Gastrocnemius medialis (tissue), 4 donors: ENCODE measurements at regions of chr10 and their contacts with region 1.

Region 1: GRCh38 chr10:71383972-71384687 is 12.6 kb upstream of the CDH23 start:
- DNase-seq: peak; percentile 24 to 55
- ATAC-seq: peak; percentile 73 to 76
- H3K4me3 ChIP-seq: no peak overlapping the region
- H3K27ac ChIP-seq: no peak overlapping the region
- H3K4me1 ChIP-seq: no peaks in the 10 kb centered on the region
- H3K27me3 ChIP-seq: peaks cover 0 to 3% (median 0%) of the 10 kb centered on the region in 3 donors
- CTCF ChIP-seq: peak; percentile 82 to 95 (median 90)
- POLR2A ChIP-seq: no peak

Region 2: GRCh38 chr10:71314028-71314693 is 70.0 kb before region 1 on chr10:
- in situ Hi-C with region 1: loop called in 1 of 4 experiments (anchors 5 kb)
- intact Hi-C with region 1: no loop called
- DNase-seq: peak in 1 of 2 donors; percentile 35
- ATAC-seq: peak; percentile 54 to 62
- H3K4me3 ChIP-seq: peak overlapping the region in 1 of 4 donors; percentile 25
- H3K27ac ChIP-seq: peak overlapping the region in 2 of 4 donors; percentile 18 to 59
- H3K4me1 ChIP-seq: peaks cover 11% of the 10 kb centered on the region in 2 donors
- H3K27me3 ChIP-seq: no peaks in the 10 kb centered on the region
- CTCF ChIP-seq: peak; percentile 39 to 96 (median 83)
- POLR2A ChIP-seq: no peak

Region 3: GRCh38 chr10:71569775-71570588 is 185.9 kb after region 1 on chr10:
- in situ Hi-C with region 1: loop called in 2 of 4 experiments (anchors 10 kb)
- intact Hi-C with region 1: loop called (anchors 1 kb)
- DNase-seq: peak; percentile 45 to 56
- ATAC-seq: peak; percentile 61 to 73
- H3K4me3 ChIP-seq: no peak overlapping the region
- H3K27ac ChIP-seq: no peak overlapping the region
- H3K4me1 ChIP-seq: peaks cover 0 to 1% of the 10 kb centered on the region in 2 donors
- H3K27me3 ChIP-seq: no peaks in the 10 kb centered on the region
- CTCF ChIP-seq: peak; percentile 75 to 89 (median 82)
- POLR2A ChIP-seq: no peak

Region 4: DNA sequence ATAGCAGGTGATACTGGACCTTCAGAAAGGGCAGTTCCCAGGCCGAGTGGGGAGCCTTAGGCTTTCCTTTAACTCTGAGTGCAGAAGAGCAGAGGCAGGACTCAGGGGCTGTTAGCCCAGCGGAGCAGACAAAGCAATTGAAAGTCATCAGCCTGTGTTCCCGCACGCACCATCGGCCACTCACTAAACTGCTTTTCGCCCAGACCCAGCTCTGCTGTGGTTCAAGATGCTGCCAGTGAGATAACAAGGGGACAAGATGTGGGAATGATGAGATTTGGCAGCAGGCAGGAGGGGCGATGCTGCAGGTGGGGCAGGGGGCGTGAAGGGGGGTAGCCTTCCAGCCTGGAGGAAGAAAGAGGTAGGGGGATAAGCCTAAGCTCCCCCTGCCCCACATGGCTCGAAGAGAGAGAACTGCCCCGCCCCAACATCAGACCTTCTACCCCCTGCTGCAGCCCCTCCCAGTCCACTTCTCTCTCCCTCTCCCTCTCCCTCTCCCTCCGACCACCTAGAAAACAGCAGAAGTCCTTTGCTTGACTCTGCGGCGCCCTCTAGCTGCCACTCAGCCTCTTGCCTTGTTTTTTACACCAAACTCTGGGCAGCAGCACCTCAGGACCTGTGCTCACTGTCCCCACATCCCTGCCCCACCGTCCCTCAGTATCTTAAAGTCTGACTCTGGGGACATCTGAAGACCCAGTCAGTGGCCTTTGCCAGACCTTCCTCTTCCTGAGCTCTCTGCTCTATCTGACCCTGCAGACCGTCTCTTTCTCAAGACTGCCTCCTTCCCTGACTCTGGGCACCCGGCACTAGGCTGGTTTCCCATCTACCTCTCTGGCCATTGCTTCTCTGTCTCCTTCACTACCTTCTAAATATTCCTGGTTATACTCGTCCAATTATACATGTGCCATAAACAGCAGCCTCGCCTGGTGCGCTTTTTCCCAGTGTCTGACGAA is 225.0 kb after region 1 on chr10:
- in situ Hi-C with region 1: no loop called
- intact Hi-C with region 1: loop called (anchors 1 kb)
- DNase-seq: peak; percentile 55 to 74
- ATAC-seq: peak in 1 of 2 donors; percentile 32
- H3K4me3 ChIP-seq: no peak overlapping the region
- H3K27ac ChIP-seq: no peak overlapping the region
- H3K4me1 ChIP-seq: peaks cover 18 to 19% of the 10 kb centered on the region in 2 donors
- H3K27me3 ChIP-seq: no peaks in the 10 kb centered on the region
- CTCF ChIP-seq: peak; percentile 69 to 89 (median 78)
- POLR2A ChIP-seq: no peak

Region 5: GRCh38 chr10:71696628-71697326 is 312.6 kb after region 1 on chr10:
- in situ Hi-C with region 1: loop called in 3 of 4 experiments (anchors 10 kb)
- intact Hi-C with region 1: loop called (anchors 5 kb)
- DNase-seq: peak; percentile 24 to 30
- ATAC-seq: peak; percentile 46 to 66
- H3K4me3 ChIP-seq: no peak overlapping the region
- H3K27ac ChIP-seq: no peak overlapping the region
- H3K4me1 ChIP-seq: peaks cover 0 to 14% of the 10 kb centered on the region in 2 donors
- H3K27me3 ChIP-seq: no peaks in the 10 kb centered on the region
- CTCF ChIP-seq: peak; percentile 70 to 89 (median 82)
- POLR2A ChIP-seq: no peak

Region 6: DNA sequence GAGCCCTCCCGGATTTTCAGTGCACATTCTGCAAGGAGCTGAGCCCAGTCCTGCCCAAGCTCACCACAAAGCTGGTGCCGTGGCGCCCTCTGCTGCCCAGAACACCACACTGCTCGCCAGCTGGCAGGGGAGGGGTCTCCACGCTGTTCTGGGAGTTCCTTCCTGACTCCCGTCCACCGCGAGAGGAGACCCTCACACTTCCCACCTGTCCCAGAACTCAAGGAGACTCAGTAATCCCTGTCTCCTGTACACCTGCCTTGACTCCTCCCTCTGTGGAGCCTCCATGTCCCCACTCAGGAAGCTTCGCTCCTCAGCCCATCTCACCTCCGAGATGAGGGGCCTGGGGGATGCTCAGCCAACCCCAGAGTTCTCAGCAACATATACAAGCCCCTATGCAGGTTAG is 324.2 kb after region 1 on chr10:
- in situ Hi-C with region 1: loop called in 3 of 4 experiments (anchors 10 kb)
- intact Hi-C with region 1: no loop called
- DNase-seq: no peak
- ATAC-seq: no peak
- H3K4me3 ChIP-seq: no peak overlapping the region
- H3K27ac ChIP-seq: no peak overlapping the region
- H3K4me1 ChIP-seq: peaks cover 11 to 14% of the 10 kb centered on the region in 2 donors
- H3K27me3 ChIP-seq: no peaks in the 10 kb centered on the region
- CTCF ChIP-seq: peak; percentile 71 to 84 (median 75)
- POLR2A ChIP-seq: no peak

Region 7: DNA sequence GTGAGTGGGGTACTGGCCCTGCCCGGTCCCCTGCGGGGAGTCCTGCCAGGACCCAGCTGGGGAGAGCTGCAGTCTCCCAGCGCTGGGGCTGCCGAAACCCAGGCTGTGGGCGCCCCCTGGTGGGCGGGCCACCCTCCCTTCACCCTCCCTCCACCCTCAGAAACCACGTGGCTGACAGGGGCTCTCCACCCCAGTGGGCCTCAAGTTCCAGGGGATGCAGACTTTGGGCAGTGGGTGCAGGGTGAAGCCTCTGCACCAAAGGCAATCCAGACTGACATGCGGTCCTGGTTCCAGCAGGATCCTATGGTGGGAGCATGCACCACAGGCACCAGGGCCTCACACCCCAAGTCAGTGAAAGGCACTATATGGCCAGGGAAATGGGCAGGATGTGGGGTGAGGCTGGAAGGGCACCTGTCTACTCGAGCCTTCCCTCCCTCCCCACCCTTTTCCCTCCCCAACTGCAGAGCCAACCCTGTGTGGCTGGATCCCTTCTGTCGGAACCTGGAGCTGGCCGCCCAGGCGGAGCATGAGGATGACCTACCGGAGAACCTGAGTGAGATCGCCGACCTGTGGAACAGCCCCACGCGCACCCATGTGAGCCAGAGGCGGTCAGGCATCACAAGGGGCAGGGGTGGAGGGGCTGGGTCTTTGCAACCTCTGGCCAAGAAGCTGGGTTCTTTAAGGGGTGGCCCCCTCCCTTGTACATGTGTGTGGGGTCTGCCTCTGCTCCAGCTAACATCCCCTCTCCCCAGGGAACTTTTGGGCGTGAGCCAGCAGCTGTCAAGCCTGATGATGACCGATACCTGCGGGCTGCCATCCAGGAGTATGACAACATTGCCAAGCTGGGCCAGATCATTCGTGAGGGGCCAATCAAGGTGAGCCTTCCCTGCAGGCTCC is 428.1 kb after region 1 on chr10:
- in situ Hi-C with region 1: loop called (anchors 10 to 25 kb)
- intact Hi-C with region 1: loop called (anchors 5 kb)
- DNase-seq: peak in 1 of 2 donors; percentile 56
- ATAC-seq: peak; percentile 57 to 67
- H3K4me3 ChIP-seq: no peak overlapping the region
- H3K27ac ChIP-seq: no peak overlapping the region
- H3K4me1 ChIP-seq: peaks cover 0 to 12% of the 10 kb centered on the region in 2 donors
- H3K27me3 ChIP-seq: no peaks in the 10 kb centered on the region
- CTCF ChIP-seq: peak; percentile 79 to 90 (median 85)
- POLR2A ChIP-seq: no peak